ENCODE measurements at regions of chr7 and their contacts with region 1.

Region 1: GRCh38 chr7:136555933-136556332 is 312.5 kb upstream of the CHRM2 start:
- DNase-seq: no peak
- ATAC-seq: no peak
- H3K4me3 ChIP-seq: no peak overlapping the region
- H3K27ac ChIP-seq: no peak overlapping the region
- H3K4me1 ChIP-seq: no peaks in the 10 kb centered on the region
- H3K27me3 ChIP-seq: no peaks in the 10 kb centered on the region
- CTCF ChIP-seq: no peak
- EP300 ChIP-seq: no peak
- POLR2A ChIP-seq: no peak
- RAD21 ChIP-seq: no peak

Region 2: DNA sequence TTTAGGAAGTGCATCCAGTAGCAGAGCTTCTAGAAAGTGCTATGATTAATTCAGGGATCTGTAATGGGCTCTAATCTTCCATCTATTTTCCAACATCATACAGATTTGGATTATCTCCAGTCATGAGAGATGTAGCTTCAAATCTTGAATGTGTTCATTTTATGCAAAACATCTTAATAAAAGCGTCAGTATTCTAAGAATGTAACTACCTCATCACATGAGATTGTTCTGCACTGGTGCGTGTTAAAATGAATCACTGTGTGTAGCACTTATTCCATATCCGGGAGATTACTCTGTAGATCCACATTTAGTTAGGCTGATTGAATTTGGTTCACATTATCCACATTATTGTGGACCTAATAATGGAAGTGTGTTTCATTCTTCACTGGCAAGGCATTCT is 32.4 kb before region 1 on chr7:
- CTCF ChIA-PET with region 1: no interaction called
- POLR2A ChIA-PET with region 1: no interaction called
- in situ Hi-C with region 1: no loop called
- intact Hi-C with region 1: loop called (anchors 1 kb)
- DNase-seq: no peak
- ATAC-seq: no peak
- H3K4me3 ChIP-seq: no peak overlapping the region
- H3K27ac ChIP-seq: no peak overlapping the region
- H3K4me1 ChIP-seq: no peaks in the 10 kb centered on the region
- H3K27me3 ChIP-seq: no peaks in the 10 kb centered on the region
- CTCF ChIP-seq: no peak
- EP300 ChIP-seq: no peak
- POLR2A ChIP-seq: no peak
- RAD21 ChIP-seq: no peak

Region 3: GRCh38 chr7:136533732-136534131 is 22.2 kb before region 1 on chr7:
- CTCF ChIA-PET with region 1: no interaction called
- POLR2A ChIA-PET with region 1: no interaction called
- in situ Hi-C with region 1: no loop called
- intact Hi-C with region 1: no loop called
- DNase-seq: no peak
- ATAC-seq: no peak
- H3K4me3 ChIP-seq: no peak overlapping the region
- H3K27ac ChIP-seq: no peak overlapping the region
- H3K4me1 ChIP-seq: no peaks in the 10 kb centered on the region
- H3K27me3 ChIP-seq: no peaks in the 10 kb centered on the region
- CTCF ChIP-seq: no peak
- EP300 ChIP-seq: no peak
- POLR2A ChIP-seq: no peak
- RAD21 ChIP-seq: no peak

Measured in K562 (cell line).